ENCODE measurements at regions of chr17 and their contacts with region 1.

Region 1: DNA sequence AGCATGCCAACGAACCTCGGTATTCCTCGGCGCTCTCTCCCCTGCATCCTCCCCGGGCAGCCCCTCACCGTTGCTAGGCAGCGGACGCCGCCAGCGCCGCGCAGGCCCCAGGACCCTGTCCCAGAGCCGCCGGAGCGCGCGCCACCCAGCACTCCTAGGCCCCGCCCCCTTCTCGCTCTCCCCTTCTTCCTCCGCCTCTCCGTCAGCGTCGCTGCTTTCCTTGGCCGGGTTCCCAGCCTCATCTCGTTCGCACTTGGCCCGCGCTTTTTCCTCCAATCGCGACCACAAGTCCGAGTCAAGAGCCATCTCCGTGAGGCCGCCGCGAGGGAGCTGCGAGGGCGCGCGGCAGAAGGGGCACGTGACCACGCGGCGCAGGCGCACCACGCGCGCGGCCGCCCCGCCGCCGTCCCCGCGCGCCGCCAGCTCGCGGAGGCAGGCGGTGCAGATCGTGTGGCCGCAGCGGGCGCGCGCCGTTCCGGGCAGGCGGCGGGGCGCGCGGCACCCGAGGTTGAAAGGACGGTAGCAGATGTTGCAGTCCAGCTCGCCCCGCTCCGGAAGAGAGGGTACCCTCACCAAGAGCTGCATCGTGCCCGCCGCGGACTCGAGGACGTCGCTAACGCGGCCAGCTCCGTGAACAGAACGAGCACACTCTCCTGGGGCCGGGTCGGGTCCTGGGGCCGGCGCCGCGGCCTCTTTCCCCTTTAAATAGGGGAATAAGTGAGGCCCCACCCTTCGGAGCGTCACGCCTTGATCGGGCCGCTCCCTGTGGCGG is at the start of gene RNF227:
- DNase-seq: peak; percentile 89
- ATAC-seq: peak; percentile 85
- H3K4me3 Mint-ChIP-seq: peak within 1 kb of the TSS; percentile 85
- H3K27ac Mint-ChIP-seq: peak within 1 kb of the TSS; percentile 95
- H3K4me1 Mint-ChIP-seq: peaks cover 35% of the 10 kb centered on the region
- H3K27me3 Mint-ChIP-seq: no peaks in the 10 kb centered on the region
- total RNA-seq, gene RNF227: 4.2 TPM

Region 2: GRCh38 chr17:7867881-7868329 is 47.9 kb before region 1 on chr17:
- CTCF ChIA-PET with region 1: interaction called, 21 read pairs
- POLR2A ChIA-PET with region 1: no interaction called
- DNase-seq: peak; percentile 65
- ATAC-seq: peak; percentile 89
- H3K4me3 Mint-ChIP-seq: peak overlapping the region; percentile 63
- H3K27ac Mint-ChIP-seq: peak overlapping the region; percentile 81
- H3K4me1 Mint-ChIP-seq: peaks cover 36% of the 10 kb centered on the region
- H3K27me3 Mint-ChIP-seq: no peaks in the 10 kb centered on the region

Region 3: DNA sequence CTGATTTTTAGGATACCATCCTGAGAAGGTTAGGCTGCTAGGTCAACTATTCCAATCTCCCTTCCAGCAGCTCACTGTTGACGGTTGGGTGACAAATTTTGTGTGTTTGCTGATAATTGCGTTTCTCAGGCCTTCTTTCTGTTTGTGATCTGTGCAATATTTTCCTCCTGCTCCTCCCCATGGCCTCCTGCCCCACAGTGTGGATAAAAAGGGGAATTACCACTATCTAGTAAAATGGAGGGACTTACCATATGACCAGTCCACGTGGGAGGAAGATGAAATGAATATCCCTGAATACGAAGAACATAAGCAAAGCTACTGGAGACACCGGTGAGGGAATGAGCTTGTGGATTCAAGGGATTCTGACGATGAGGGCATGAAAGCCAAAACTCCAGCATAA is 18.0 kb before region 1 on chr17:
- CTCF ChIA-PET with region 1: interaction called, 17 read pairs
- POLR2A ChIA-PET with region 1: interaction called, 3 read pairs
- DNase-seq: no peak
- ATAC-seq: no peak
- H3K4me3 Mint-ChIP-seq: no peak overlapping the region
- H3K27ac Mint-ChIP-seq: peak overlapping the region; percentile 0
- H3K4me1 Mint-ChIP-seq: peaks cover 12% of the 10 kb centered on the region
- H3K27me3 Mint-ChIP-seq: no peaks in the 10 kb centered on the region

Region 4: GRCh38 chr17:8151123-8151640 is 235.4 kb after region 1 on chr17:
- CTCF ChIA-PET with region 1: no interaction called
- POLR2A ChIA-PET with region 1: no interaction called
- DNase-seq: peak; percentile 93
- ATAC-seq: peak; percentile 42
- H3K4me3 Mint-ChIP-seq: peak overlapping the region; percentile 85
- H3K27ac Mint-ChIP-seq: peak overlapping the region; percentile 91
- H3K4me1 Mint-ChIP-seq: peaks cover 15% of the 10 kb centered on the region
- H3K27me3 Mint-ChIP-seq: no peaks in the 10 kb centered on the region